ENCODE measurements at regions of chr6 and their contacts with region 1.

Region 1: GRCh38 chr6:152552616-152553209 is 84.4 kb downstream of the SYNE1 start:
- DNase-seq: peak; percentile 60
- H3K4me3 ChIP-seq: no peak overlapping the region
- H3K27ac ChIP-seq: no peak overlapping the region
- H3K4me1 ChIP-seq: no peaks in the 10 kb centered on the region
- H3K27me3 ChIP-seq: no peaks in the 10 kb centered on the region
- CTCF ChIP-seq: peak; percentile 65 to 86 (median 78)
- POLR2A ChIP-seq: no peak

Region 2: GRCh38 chr6:152100183-152100618 is 452.5 kb before region 1 on chr6:
- intact Hi-C with region 1: no loop called
- DNase-seq: no peak
- H3K4me3 ChIP-seq: no peak overlapping the region
- H3K27ac ChIP-seq: no peak overlapping the region
- H3K4me1 ChIP-seq: no peaks in the 10 kb centered on the region
- H3K27me3 ChIP-seq: no peaks in the 10 kb centered on the region
- CTCF ChIP-seq: no peak
- POLR2A ChIP-seq: no peak

Region 3: DNA sequence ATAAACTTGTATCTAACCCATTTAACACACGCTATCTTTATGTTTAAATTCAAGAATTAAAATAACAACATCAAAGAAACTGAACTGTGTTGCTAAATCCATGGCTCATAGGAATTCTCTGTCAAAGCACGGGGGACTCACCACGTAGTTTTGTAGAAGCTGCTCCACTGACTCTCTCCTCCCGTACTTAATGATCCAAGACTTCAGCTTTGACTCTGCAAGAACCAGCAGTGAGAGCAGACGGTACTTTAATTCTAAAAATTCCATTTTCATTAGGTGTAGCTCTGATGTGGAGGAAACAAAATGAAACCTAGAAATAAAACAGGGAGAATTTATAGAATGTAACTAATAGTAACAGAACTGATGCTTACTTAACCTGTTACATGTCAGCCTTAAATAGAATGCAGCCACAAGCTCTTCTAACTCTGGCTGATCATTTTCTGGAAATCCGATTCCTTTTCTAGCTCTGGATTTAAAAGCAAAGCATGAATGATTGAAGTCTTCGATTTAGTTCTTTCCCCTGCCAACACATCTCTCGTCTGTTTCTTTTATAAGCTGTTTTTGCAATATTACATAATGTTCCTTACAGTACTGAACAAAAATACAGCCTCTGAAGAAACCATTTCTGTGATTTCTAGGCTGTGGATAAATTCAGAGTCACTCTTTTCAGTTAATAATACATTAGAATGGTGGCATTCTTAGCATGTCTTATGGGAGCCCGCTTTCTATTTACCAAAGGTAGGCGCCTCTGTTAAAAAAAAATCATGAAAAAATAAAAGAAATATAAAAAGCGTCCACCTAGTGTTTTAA is 81.1 kb before region 1 on chr6:
- intact Hi-C with region 1: no loop called
- DNase-seq: no peak
- H3K4me3 ChIP-seq: no peak overlapping the region
- H3K27ac ChIP-seq: no peak overlapping the region
- H3K4me1 ChIP-seq: no peaks in the 10 kb centered on the region
- H3K27me3 ChIP-seq: no peaks in the 10 kb centered on the region
- CTCF ChIP-seq: no peak
- POLR2A ChIP-seq: no peak

Region 4: GRCh38 chr6:152503546-152503945 is 49.2 kb before region 1 on chr6:
- intact Hi-C with region 1: no loop called
- DNase-seq: no peak
- H3K4me3 ChIP-seq: no peak overlapping the region
- H3K27ac ChIP-seq: no peak overlapping the region
- H3K4me1 ChIP-seq: no peaks in the 10 kb centered on the region
- H3K27me3 ChIP-seq: no peaks in the 10 kb centered on the region
- CTCF ChIP-seq: no peak
- POLR2A ChIP-seq: no peak

Region 5: GRCh38 chr6:152642989-152643388 is 90.3 kb after region 1 on chr6:
- intact Hi-C with region 1: loop called (anchors 5 kb)
- DNase-seq: peak; percentile 74
- H3K4me3 ChIP-seq: no peak overlapping the region
- H3K27ac ChIP-seq: no peak overlapping the region
- H3K4me1 ChIP-seq: no peaks in the 10 kb centered on the region
- H3K27me3 ChIP-seq: no peaks in the 10 kb centered on the region
- CTCF ChIP-seq: peak in 3 of 4 experiments; percentile 53 to 68 (median 55)
- POLR2A ChIP-seq: no peak

Region 6: DNA sequence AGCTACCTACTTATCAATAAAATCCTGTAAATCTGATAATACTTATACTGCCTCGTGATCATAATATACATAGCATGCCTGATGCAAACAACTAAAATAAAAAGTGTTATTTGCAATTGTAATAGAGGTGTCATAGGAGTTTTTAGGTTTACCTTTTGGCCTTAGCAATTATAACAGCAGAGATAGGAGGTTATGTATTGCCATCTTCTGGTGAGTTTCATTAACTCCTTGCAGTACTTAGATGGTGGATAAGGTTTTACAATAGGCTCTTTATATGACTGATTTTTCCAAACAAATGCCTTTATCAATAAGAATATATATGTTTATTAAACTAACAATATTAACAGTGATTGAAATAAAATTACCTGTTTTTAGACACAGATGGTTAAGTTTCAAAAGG is 117.2 kb after region 1 on chr6:
- intact Hi-C with region 1: loop called (anchors 10 kb)
- DNase-seq: no peak
- H3K4me3 ChIP-seq: no peak overlapping the region
- H3K27ac ChIP-seq: no peak overlapping the region
- H3K4me1 ChIP-seq: no peaks in the 10 kb centered on the region
- H3K27me3 ChIP-seq: no peaks in the 10 kb centered on the region
- CTCF ChIP-seq: peak in 3 of 4 experiments; percentile 22 to 47 (median 45)
- POLR2A ChIP-seq: no peak

Region 7: DNA sequence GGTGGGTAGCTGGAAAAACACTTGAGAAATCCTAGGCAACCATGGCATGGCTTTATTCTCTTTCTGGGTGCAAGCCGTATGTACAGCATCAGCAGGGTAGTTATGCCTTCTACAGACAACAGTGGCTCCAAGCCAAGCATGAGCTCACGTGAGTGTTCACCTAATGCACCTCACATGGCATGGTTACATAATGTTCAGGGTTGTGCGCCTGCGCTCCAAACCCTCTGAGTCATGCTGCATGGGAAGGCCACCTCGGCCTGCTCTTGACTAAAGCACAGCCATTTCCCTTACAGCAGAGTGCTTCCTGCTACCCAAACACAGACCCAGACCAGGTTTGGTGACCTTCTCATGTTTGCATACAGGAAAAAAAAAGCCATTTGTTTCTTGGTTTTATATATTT is 294.1 kb after region 1 on chr6:
- intact Hi-C with region 1: no loop called
- DNase-seq: no peak
- H3K4me3 ChIP-seq: no peak overlapping the region
- H3K27ac ChIP-seq: no peak overlapping the region
- H3K4me1 ChIP-seq: no peaks in the 10 kb centered on the region
- H3K27me3 ChIP-seq: no peaks in the 10 kb centered on the region
- CTCF ChIP-seq: no peak
- POLR2A ChIP-seq: no peak